Astrocyte of the cerebellum (primary cell): ENCODE measurements at regions of chr6 and their contacts with region 1.

Region 1: GRCh38 chr6:152863618-152864326 is 113.2 kb downstream of the VIP start:
- DNase-seq: peak; percentile 78
- H3K4me3 ChIP-seq: no peak overlapping the region
- CTCF ChIP-seq: peak; percentile 60

Region 2: DNA sequence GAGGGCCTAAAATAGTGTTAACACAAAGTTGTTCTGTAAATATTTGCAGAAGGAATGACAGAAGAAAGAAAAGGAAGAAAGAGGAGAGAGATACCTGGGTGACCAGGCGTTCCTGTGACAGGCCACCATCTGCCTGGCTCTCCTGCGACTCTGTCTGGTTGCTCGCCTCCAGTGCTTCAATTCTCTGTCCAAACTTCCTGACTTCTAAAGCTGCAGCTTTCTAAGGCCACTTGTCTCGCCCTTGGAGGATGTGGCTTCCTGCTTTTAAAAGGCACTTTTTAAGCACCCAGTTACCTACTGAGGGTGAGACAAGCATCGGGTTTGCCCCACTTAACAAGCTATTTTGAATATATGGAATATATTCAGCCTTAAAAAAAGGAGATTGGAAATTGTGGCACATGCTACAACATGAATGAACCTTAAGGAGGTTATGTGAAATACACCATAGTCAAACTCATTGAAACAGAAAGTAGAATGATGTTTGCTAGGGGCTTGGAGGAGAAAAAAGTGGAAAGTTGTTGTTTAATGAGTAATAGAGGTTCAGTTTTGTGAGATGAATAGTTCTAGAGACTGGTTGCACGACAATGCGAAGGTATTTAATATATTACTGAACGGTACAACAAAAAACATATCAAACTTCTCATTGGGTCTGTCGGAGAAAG is 80.4 kb before region 1 on chr6:
- in situ Hi-C with region 1: no loop called
- DNase-seq: no peak
- H3K4me3 ChIP-seq: no peak overlapping the region
- CTCF ChIP-seq: no peak

Region 3: GRCh38 chr6:152952866-152953509 is 89.2 kb after region 1 on chr6:
- in situ Hi-C with region 1: loop called (anchors 5 kb)
- DNase-seq: peak; percentile 20
- H3K4me3 ChIP-seq: no peak overlapping the region
- CTCF ChIP-seq: peak; percentile 42